CD8-positive, alpha-beta T cell (primary cell): ENCODE measurements at regions of chr16 and their contacts with region 1.

Region 1: GRCh38 chr16:15055141-15056053 is 477 bp downstream of the NTAN1 start:
- DNase-seq: peak in 6 of 9 experiments; percentile 62 to 90 (median 82)
- ATAC-seq: peak; percentile 75
- H3K4me3 ChIP-seq: peak overlapping the region; percentile 86 to 94
- H3K4me3 Mint-ChIP-seq: peak overlapping the region; percentile 87
- H3K27ac ChIP-seq: peak overlapping the region; percentile 67 to 68
- H3K27ac Mint-ChIP-seq: peak overlapping the region; percentile 70
- H3K4me1 ChIP-seq: peaks cover 14% of the 10 kb centered on the region
- H3K4me1 Mint-ChIP-seq: peaks cover 16% of the 10 kb centered on the region
- H3K27me3 ChIP-seq: no peaks in the 10 kb centered on the region
- H3K27me3 Mint-ChIP-seq: no peaks in the 10 kb centered on the region
- CTCF ChIP-seq: peak; percentile 32

Region 2: DNA sequence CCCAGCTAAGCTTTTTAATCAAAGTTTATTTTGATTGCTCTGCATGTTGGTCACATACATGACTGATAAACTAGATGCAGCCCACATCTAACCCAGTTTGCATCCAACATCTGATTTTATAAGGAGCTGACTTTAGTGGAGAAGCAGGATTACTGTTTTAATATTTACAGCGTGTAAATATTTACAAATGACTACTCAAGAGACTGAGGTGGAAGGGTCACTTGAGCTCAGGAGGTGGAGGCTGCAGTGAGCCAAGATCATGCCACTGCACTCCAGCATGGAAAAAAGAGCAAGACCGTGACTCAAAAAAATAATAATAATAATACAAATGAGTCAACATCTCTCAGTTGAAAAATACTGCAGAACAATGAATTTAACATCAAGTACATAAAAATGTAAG is 476.1 kb before region 1 on chr16:
- CTCF ChIA-PET with region 1: no interaction called
- POLR2A ChIA-PET with region 1: no interaction called
- intact Hi-C with region 1: no loop called
- DNase-seq: no peak
- ATAC-seq: no peak
- H3K4me3 ChIP-seq: no peak overlapping the region
- H3K4me3 Mint-ChIP-seq: no peak overlapping the region
- H3K27ac ChIP-seq: no peak overlapping the region
- H3K27ac Mint-ChIP-seq: no peak overlapping the region
- H3K4me1 ChIP-seq: no peaks in the 10 kb centered on the region
- H3K4me1 Mint-ChIP-seq: no peaks in the 10 kb centered on the region
- H3K27me3 ChIP-seq: no peaks in the 10 kb centered on the region
- H3K27me3 Mint-ChIP-seq: no peaks in the 10 kb centered on the region
- CTCF ChIP-seq: no peak

Region 3: GRCh38 chr16:14632692-14633569 is 422.5 kb before region 1 on chr16 and contains the start of gene BFAR:
- CTCF ChIA-PET with region 1: no interaction called
- POLR2A ChIA-PET with region 1: no interaction called
- intact Hi-C with region 1: loop called in 1 of 2 experiments (anchors 5 kb)
- DNase-seq: peak; percentile 98 to 100 (median 99)
- ATAC-seq: peak; percentile 68
- H3K4me3 ChIP-seq: peak within 1 kb of the TSS; percentile 95 to 100
- H3K4me3 Mint-ChIP-seq: peak within 1 kb of the TSS; percentile 100
- H3K27ac ChIP-seq: peak within 1 kb of the TSS; percentile 82 to 94
- H3K27ac Mint-ChIP-seq: peak within 1 kb of the TSS; percentile 99
- H3K4me1 ChIP-seq: peaks cover 60% of the 10 kb centered on the region
- H3K4me1 Mint-ChIP-seq: peaks cover 73% of the 10 kb centered on the region
- H3K27me3 ChIP-seq: no peaks in the 10 kb centered on the region
- H3K27me3 Mint-ChIP-seq: no peaks in the 10 kb centered on the region
- CTCF ChIP-seq: no peak
- total RNA-seq, gene BFAR: 34.0 to 41.7 TPM

Region 4: DNA sequence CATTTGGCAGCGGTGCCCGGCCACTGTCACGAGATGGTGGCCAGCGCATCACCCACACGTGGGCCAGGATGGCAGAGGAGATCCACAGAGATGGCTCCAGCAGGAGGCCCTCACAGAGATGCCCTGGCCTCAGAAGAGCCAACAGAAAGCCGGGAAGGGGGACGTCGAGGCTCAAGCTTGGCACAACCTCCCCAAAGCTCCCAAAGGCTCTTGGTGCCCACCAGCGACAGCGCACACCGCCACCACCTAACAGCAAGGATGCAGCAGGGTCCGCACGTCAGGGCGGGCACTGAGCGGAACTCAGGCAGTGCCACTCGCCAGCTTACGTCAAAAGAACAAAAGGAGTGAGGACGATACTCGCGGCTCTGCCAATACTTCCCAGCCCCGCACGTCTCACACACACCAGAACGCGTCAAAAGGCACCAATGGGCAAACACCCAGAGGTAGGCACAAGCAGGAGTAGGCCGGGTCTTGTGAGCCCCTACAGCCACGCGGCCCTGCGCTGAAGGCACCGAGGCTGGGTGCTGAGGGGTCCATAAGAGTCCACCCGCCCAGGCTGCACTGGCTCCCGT is 90.8 kb after region 1 on chr16:
- CTCF ChIA-PET with region 1: no interaction called
- POLR2A ChIA-PET with region 1: no interaction called
- intact Hi-C with region 1: loop called in 1 of 2 experiments (anchors 10 kb)
- DNase-seq: no peak
- ATAC-seq: no peak
- H3K4me3 ChIP-seq: no peak overlapping the region
- H3K4me3 Mint-ChIP-seq: no peak overlapping the region
- H3K27ac ChIP-seq: no peak overlapping the region
- H3K27ac Mint-ChIP-seq: no peak overlapping the region
- H3K4me1 ChIP-seq: no peaks in the 10 kb centered on the region
- H3K4me1 Mint-ChIP-seq: peaks cover 11% of the 10 kb centered on the region
- H3K27me3 ChIP-seq: no peaks in the 10 kb centered on the region
- H3K27me3 Mint-ChIP-seq: no peaks in the 10 kb centered on the region
- CTCF ChIP-seq: no peak

Region 5: DNA sequence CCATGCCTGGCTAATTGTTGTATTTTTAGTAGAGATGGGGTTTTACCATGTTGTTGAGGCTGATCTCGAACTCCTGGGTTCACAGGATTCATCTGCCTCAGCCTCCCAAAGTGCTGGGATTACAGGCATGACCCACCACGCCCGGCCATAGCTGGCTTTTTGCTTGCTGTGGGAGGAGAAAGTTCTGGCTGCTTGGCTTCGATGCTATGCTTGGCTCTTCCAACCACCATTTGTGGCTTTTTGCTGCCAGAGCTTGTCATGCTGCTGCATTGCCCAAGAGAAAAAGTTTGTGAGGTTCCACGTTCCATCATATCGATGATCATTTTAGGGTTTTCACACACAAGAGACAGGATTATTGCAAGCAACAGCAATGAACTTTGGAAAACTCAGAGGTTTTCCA is 395.2 kb after region 1 on chr16:
- CTCF ChIA-PET with region 1: no interaction called
- POLR2A ChIA-PET with region 1: no interaction called
- intact Hi-C with region 1: no loop called
- DNase-seq: no peak
- ATAC-seq: no peak
- H3K4me3 ChIP-seq: no peak overlapping the region
- H3K4me3 Mint-ChIP-seq: no peak overlapping the region
- H3K27ac ChIP-seq: no peak overlapping the region
- H3K27ac Mint-ChIP-seq: no peak overlapping the region
- H3K4me1 ChIP-seq: no peaks in the 10 kb centered on the region
- H3K4me1 Mint-ChIP-seq: peaks cover 3% of the 10 kb centered on the region
- H3K27me3 ChIP-seq: no peaks in the 10 kb centered on the region
- H3K27me3 Mint-ChIP-seq: peaks cover 7% of the 10 kb centered on the region
- CTCF ChIP-seq: no peak